Activated CD8-positive, alpha-beta T cell treated with anti-CD3 and anti-CD28 coated beads, Interleukin-2, amount 10 ng/mL, durations not matched to agents 7 days and 5 days (primary cell): ENCODE measurements at regions of chr10 and their contacts with region 1.

Region 1: GRCh38 chr10:102432162-102432950 is at the start of gene CUEDC2:
- DNase-seq: peak; percentile 97
- ATAC-seq: peak; percentile 90
- H3K4me3 Mint-ChIP-seq: peak within 1 kb of the TSS; percentile 95
- H3K27ac Mint-ChIP-seq: peak within 1 kb of the TSS; percentile 94
- H3K4me1 Mint-ChIP-seq: peaks cover 47% of the 10 kb centered on the region
- H3K27me3 Mint-ChIP-seq: no peaks in the 10 kb centered on the region
- total RNA-seq, gene CUEDC2: 71.7 to 77.6 TPM

Region 2: GRCh38 chr10:102450194-102450938 is 18.0 kb after region 1 on chr10:
- CTCF ChIA-PET with region 1: interaction called, 26 read pairs
- POLR2A ChIA-PET with region 1: interaction called, 81 read pairs
- DNase-seq: peak; percentile 93
- ATAC-seq: peak; percentile 85
- H3K4me3 Mint-ChIP-seq: peak overlapping the region; percentile 90
- H3K27ac Mint-ChIP-seq: peak overlapping the region; percentile 93
- H3K4me1 Mint-ChIP-seq: peaks cover 47% of the 10 kb centered on the region
- H3K27me3 Mint-ChIP-seq: no peaks in the 10 kb centered on the region

Region 3: GRCh38 chr10:102461187-102462054 is 29.1 kb after region 1 on chr10:
- CTCF ChIA-PET with region 1: interaction called, 6 read pairs
- POLR2A ChIA-PET with region 1: interaction called, 11 read pairs
- DNase-seq: peak; percentile 94
- ATAC-seq: peak; percentile 97
- H3K4me3 Mint-ChIP-seq: peak overlapping the region; percentile 90
- H3K27ac Mint-ChIP-seq: peak overlapping the region; percentile 79
- H3K4me1 Mint-ChIP-seq: peaks cover 32% of the 10 kb centered on the region
- H3K27me3 Mint-ChIP-seq: no peaks in the 10 kb centered on the region

Region 4: DNA sequence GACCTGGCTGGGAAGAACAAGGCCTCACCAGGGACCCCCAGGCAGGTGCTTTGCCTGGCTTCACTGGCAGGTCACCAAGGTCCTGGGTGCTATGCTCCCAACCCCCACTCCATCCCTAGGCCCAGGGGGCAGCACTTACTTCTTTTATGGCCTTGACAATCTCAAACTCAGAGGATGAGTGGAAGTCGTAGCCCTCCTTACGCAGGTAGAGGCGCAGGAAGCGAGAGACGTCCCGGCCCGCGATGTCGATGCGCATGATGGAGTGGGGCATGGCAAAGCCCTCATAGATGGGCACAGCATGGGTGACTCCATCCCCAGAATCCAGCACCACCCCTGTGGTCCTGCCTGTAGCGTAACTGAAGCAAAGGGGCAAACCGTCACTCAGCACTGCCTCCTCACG is 51.7 kb after region 1 on chr10:
- CTCF ChIA-PET with region 1: interaction called, 28 read pairs
- POLR2A ChIA-PET with region 1: no interaction called
- DNase-seq: no peak
- ATAC-seq: no peak
- H3K4me3 Mint-ChIP-seq: no peak overlapping the region
- H3K27ac Mint-ChIP-seq: no peak overlapping the region
- H3K4me1 Mint-ChIP-seq: peaks cover 2% of the 10 kb centered on the region
- H3K27me3 Mint-ChIP-seq: no peaks in the 10 kb centered on the region